Right ventricle myocardium inferior (tissue), 1 donor: ENCODE measurements at regions of chr21 and their contacts with region 1.

Region 1: GRCh38 chr21:28745131-28746016 is 247.3 kb downstream of the LTN1 start:
- DNase-seq: no peak
- ATAC-seq: peak; percentile 89

Region 2: DNA sequence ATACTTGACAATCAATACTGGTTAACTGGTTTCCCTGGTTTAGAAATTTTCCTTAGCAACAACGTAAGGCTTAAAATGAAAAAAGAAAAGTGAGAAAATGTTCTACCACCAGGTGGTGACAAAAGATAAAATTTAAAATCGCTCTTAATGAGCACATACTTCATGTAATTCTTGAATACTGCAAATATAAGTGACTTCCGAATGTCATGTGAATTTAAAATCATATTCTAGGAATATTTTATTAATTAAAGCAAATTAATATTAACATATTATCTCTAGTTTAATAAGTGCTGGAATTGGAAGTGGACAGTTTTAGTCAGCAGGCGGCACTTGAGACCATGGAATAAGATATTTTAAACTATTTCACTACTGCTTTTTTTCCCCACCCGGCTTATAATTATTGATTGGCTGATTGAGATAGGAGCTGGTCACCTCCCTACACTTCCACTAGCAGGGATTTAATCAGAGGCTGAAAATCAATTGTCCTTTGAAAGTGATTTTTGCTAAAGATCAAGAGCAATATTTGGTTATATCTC is 1895.2 kb before region 1 on chr21:
- intact Hi-C with region 1: loop called (anchors 1 kb)
- DNase-seq: no peak
- ATAC-seq: no peak

Region 3: GRCh38 chr21:27700974-27701614 is 1044.3 kb before region 1 on chr21:
- intact Hi-C with region 1: loop called (anchors 5 kb)
- DNase-seq: peak; percentile 82
- ATAC-seq: peak; percentile 93

Region 4: DNA sequence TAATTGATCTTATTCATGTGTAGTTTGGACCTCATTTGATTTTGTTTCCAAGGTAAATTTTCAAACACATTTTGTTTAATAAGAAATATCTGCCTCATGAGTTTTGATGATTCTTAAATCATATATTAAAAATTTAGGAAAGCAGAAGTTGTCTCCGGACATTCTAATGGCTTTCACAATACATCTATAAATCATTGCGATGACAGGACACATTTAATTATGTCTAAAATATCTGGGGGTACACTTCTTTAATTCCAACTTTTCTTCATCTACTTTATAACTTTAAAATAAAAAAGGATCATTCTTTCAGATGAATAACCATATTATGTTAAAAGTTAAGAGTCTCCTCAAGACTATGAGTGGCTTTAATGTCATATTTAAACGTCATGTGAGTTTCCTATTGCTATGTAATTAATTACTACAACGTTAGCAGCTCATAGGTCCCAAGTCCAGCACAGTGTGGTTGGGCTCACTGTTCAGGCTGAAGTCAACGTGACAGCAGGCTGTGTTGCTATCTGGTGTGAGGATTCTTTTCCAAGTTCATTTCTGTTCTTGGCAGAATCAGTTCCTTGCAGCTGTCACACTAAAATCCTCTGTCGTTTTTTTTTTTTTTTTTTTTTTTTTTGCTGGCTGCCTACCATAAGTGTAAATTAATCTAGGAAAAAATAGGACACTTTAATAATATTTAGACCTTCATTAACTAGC is 646.2 kb before region 1 on chr21:
- intact Hi-C with region 1: loop called (anchors 10 kb)
- DNase-seq: peak; percentile 74
- ATAC-seq: peak; percentile 99

Region 5: GRCh38 chr21:28516991-28517592 is 228.3 kb before region 1 on chr21:
- intact Hi-C with region 1: loop called (anchors 2 kb)
- DNase-seq: peak; percentile 64
- ATAC-seq: peak; percentile 92

Region 6: GRCh38 chr21:28793043-28793442 is 47.7 kb after region 1 on chr21:
- intact Hi-C with region 1: loop called (anchors 2 kb)
- DNase-seq: no peak
- ATAC-seq: no peak

Region 7: GRCh38 chr21:28943631-28944030 is 198.3 kb after region 1 on chr21:
- intact Hi-C with region 1: loop called (anchors 2 kb)
- DNase-seq: no peak
- ATAC-seq: no peak